MCF 10A (cell line): ENCODE measurements at regions of chr6 and their contacts with region 1.

Region 1: DNA sequence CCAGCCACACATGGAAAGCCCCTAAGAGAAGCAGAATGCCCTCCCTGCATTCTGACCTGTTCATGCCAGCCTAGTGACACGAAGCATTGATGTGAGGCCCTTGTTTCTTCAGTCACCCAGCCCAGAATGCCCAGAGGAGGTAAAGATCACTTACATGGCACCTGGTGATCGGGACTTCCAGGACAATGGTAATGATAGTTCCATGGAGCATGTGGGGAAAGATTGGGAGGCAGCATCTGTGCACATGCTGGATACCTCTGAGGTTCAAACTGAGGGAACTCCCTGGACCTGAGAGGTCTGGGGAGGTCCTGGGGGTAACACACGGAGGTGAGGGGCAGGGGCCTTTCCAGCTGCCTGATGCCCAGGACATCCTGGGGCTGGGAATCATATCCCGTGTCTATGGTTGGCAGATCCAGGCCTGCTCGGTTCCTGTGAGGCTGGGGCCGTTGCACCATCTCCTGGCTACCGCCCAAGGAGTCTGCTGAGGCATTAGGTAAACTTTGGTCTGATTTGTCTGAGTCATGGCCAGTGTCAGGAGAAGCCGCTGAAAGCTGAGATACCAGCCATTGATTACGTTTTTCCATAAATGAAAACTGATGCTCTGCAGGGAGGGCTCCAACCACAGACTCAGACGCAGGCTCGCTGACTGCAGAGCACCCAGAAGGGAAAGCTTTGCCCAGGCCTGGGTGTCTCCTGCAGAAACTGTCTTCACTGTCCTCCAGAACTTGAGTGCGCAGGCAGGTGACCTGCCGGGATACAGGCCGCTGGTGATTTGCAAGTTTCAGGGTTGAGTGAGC is 14.4 kb downstream of the TRAF3IP2 start:
- DNase-seq: peak; percentile 99
- H3K4me3 Mint-ChIP-seq: peak overlapping the region; percentile 43
- H3K27ac Mint-ChIP-seq: peak overlapping the region; percentile 87
- H3K4me1 Mint-ChIP-seq: peaks cover 53% of the 10 kb centered on the region
- H3K27me3 Mint-ChIP-seq: no peaks in the 10 kb centered on the region
- CTCF ChIP-seq: no peak

Region 2: DNA sequence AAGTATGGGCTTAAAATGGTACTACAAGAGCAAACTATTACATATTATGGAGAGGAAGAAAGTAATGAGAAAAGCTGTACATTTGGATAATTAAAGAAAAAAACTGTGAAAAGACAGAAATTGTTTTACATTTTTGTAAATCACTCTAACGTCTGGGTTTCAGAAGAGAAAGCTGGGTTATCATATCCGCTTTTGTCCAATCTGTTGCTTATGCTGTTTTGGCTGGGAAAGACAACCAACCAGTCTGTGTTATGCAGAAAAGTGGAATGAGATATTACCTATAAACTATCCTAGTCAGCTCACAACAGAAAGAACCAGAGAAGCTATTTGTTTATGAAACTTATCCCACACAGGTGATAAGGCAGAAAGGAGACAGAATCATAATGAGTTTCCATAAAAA is 140.7 kb before region 1 on chr6:
- CTCF ChIA-PET with region 1: no interaction called
- POLR2A ChIA-PET with region 1: no interaction called
- intact Hi-C with region 1: no loop called
- DNase-seq: no peak
- H3K4me3 Mint-ChIP-seq: no peak overlapping the region
- H3K27ac Mint-ChIP-seq: no peak overlapping the region
- H3K4me1 Mint-ChIP-seq: peaks cover 14% of the 10 kb centered on the region
- H3K27me3 Mint-ChIP-seq: no peaks in the 10 kb centered on the region
- CTCF ChIP-seq: no peak

Region 3: DNA sequence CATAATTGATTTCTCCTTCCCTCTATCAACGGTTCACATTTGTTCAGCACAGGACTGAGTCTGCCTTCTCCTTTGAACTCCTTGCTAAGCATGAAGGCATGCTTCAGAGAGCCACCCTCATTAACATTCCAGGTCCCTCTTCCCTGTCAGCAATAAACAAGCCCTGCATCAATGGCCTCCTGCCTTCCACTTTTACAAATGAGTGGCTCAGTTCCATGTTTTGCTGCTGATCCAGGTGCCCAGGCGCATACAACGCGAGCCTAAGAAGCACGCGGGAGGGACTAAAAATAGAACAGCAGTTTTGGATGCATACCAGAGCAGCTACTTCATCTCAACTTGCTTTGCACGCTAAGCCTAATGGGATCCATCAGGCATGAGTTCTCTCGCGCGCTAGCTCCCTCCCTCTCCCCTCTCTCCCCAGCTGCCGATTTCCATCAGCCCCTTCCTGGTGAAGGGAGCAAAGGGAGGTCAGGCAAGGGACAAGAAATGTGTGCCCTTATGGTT is 39.0 kb before region 1 on chr6:
- CTCF ChIA-PET with region 1: interaction called, 3 read pairs
- POLR2A ChIA-PET with region 1: interaction called, 18 read pairs
- intact Hi-C with region 1: no loop called
- DNase-seq: peak; percentile 81
- H3K4me3 Mint-ChIP-seq: peak overlapping the region; percentile 28
- H3K27ac Mint-ChIP-seq: peak overlapping the region; percentile 21
- H3K4me1 Mint-ChIP-seq: peaks cover 41% of the 10 kb centered on the region
- H3K27me3 Mint-ChIP-seq: no peaks in the 10 kb centered on the region
- CTCF ChIP-seq: no peak

Region 4: GRCh38 chr6:111573892-111574797 is 17.2 kb before region 1 on chr6:
- CTCF ChIA-PET with region 1: interaction called, 3 read pairs
- POLR2A ChIA-PET with region 1: interaction called, 72 read pairs
- intact Hi-C with region 1: loop called (anchors 1 kb)
- DNase-seq: peak; percentile 61
- H3K4me3 Mint-ChIP-seq: no peak overlapping the region
- H3K27ac Mint-ChIP-seq: peak overlapping the region; percentile 65
- H3K4me1 Mint-ChIP-seq: peaks cover 22% of the 10 kb centered on the region
- H3K27me3 Mint-ChIP-seq: no peaks in the 10 kb centered on the region
- CTCF ChIP-seq: no peak